Mammary epithelial cell (primary cell): ENCODE measurements at regions of chr2 and their contacts with region 1.

Region 1: GRCh38 chr2:69559442-69560146 is 83.9 kb downstream of the AAK1 start:
- DNase-seq: peak; percentile 51
- H3K4me3 ChIP-seq: no peak overlapping the region
- H3K27ac ChIP-seq: no peak overlapping the region
- H3K4me1 ChIP-seq: peaks cover 8% of the 10 kb centered on the region
- H3K27me3 ChIP-seq: no peaks in the 10 kb centered on the region
- CTCF ChIP-seq: peak; percentile 76 to 84

Region 2: DNA sequence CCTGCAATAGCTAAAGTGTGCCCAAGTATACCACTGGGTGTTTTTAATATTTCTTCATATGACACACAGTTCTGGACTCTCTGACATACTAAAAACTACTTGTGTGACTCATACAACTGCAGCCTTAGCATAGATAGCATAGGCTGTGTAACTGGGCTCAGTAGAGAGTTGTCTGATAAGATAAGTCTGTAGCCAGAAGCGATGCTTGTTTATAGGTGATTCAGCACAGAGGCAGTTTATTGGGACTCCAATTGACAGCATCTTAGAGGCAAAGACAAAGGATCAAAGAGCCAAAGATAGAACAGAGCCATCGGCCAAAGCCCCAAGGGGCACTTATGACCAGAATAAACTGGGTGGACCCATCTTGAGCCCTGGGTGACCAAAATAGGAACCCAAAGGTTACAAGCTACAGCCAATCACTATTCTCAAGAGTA is 41.6 kb after region 1 on chr2:
- CTCF ChIA-PET with region 1: no interaction called
- dilution Hi-C with region 1: loop called (anchors 5 kb)
- in situ Hi-C with region 1: no loop called
- intact Hi-C with region 1: no loop called
- DNase-seq: peak; percentile 73
- H3K4me3 ChIP-seq: no peak overlapping the region
- H3K27ac ChIP-seq: no peak overlapping the region
- H3K4me1 ChIP-seq: peaks cover 2% of the 10 kb centered on the region
- H3K27me3 ChIP-seq: no peaks in the 10 kb centered on the region
- CTCF ChIP-seq: no peak

Region 3: GRCh38 chr2:69893684-69894551 is 334.3 kb after region 1 on chr2 and contains the start of gene SNRNP27:
- CTCF ChIA-PET with region 1: no interaction called
- dilution Hi-C with region 1: no loop called
- in situ Hi-C with region 1: no loop called
- intact Hi-C with region 1: no loop called
- DNase-seq: peak; percentile 71
- H3K4me3 ChIP-seq: peak within 1 kb of the TSS; percentile 59 to 96 (median 96)
- H3K27ac ChIP-seq: peak within 1 kb of the TSS; percentile 94
- H3K4me1 ChIP-seq: peaks cover 10% of the 10 kb centered on the region
- H3K27me3 ChIP-seq: no peaks in the 10 kb centered on the region
- CTCF ChIP-seq: no peak
- total RNA-seq, gene SNRNP27: 25.3 to 51.2 TPM

Region 4: DNA sequence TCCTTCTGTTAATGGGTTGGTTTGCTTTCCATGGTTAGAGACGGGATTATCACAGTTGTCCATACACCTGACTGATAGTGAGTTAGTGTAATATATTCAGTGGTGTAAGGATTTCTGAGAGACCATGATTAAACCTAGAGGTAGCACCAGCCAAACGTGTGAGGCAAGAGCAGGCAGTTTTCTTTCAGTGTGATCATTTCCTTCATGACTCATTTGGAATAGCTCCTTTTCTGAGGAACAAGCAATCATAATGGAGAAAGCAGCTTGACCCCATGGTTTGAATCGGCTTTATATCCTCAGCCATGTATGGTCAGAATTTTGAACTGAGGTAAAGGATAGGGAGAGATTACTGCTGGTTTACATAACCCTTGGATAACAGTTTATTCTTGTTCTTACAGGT is 358.3 kb after region 1 on chr2:
- CTCF ChIA-PET with region 1: no interaction called
- dilution Hi-C with region 1: no loop called
- in situ Hi-C with region 1: no loop called
- intact Hi-C with region 1: no loop called
- DNase-seq: peak; percentile 82
- H3K4me3 ChIP-seq: no peak overlapping the region
- H3K27ac ChIP-seq: peak overlapping the region; percentile 74
- H3K4me1 ChIP-seq: peaks cover 31% of the 10 kb centered on the region
- H3K27me3 ChIP-seq: no peaks in the 10 kb centered on the region
- CTCF ChIP-seq: no peak